CD4-positive, alpha-beta memory T cell (primary cell): ENCODE measurements at regions of chr2 and their contacts with region 1.

Region 1: GRCh38 chr2:231674587-231675338 is 33.6 kb upstream of the PTMA start:
- DNase-seq: peak in 4 of 5 donors; percentile 33 to 52 (median 38)
- H3K4me3 ChIP-seq: no peak overlapping the region
- H3K4me3 Mint-ChIP-seq: no peak overlapping the region
- H3K27ac ChIP-seq: no peak overlapping the region
- H3K27ac Mint-ChIP-seq: peak overlapping the region in 1 of 7 donors; percentile 37
- H3K4me1 ChIP-seq: peaks cover 10% of the 10 kb centered on the region
- H3K4me1 Mint-ChIP-seq: peaks cover 2 to 10% (median 4%) of the 10 kb centered on the region in 4 donors
- H3K27me3 ChIP-seq: no peaks in the 10 kb centered on the region
- H3K27me3 Mint-ChIP-seq: peaks cover 1 to 2% of the 10 kb centered on the region in 2 donors

Region 2: DNA sequence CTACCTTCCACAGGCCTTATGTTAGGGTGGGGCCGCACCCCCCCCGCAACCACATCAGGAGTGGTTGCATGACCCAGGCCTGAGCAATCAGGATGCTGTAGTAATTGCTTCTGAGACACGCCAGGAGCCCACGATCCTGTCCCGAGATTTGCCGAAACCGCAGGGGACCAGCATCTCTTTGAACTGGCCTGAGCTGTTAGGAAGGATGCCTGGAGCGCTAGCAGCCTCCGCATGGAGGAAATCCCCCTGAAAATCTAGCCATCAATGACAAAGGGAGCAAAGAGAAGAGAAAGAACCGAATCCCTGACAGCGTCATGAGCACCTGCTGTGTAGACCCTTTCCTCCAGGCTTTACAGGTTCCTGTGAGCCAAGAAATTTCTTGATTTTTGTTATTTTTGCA is 90.8 kb before region 1 on chr2:
- CTCF ChIA-PET with region 1: no interaction called
- POLR2A ChIA-PET with region 1: no interaction called
- intact Hi-C with region 1: no loop called
- DNase-seq: no peak
- H3K4me3 ChIP-seq: no peak overlapping the region
- H3K4me3 Mint-ChIP-seq: no peak overlapping the region
- H3K27ac ChIP-seq: no peak overlapping the region
- H3K27ac Mint-ChIP-seq: no peak overlapping the region
- H3K4me1 ChIP-seq: no peaks in the 10 kb centered on the region
- H3K4me1 Mint-ChIP-seq: peaks cover 0 to 2% (median 0%) of the 10 kb centered on the region in 4 donors
- H3K27me3 ChIP-seq: no peaks in the 10 kb centered on the region
- H3K27me3 Mint-ChIP-seq: peaks cover 7 to 12% of the 10 kb centered on the region in 2 donors

Region 3: DNA sequence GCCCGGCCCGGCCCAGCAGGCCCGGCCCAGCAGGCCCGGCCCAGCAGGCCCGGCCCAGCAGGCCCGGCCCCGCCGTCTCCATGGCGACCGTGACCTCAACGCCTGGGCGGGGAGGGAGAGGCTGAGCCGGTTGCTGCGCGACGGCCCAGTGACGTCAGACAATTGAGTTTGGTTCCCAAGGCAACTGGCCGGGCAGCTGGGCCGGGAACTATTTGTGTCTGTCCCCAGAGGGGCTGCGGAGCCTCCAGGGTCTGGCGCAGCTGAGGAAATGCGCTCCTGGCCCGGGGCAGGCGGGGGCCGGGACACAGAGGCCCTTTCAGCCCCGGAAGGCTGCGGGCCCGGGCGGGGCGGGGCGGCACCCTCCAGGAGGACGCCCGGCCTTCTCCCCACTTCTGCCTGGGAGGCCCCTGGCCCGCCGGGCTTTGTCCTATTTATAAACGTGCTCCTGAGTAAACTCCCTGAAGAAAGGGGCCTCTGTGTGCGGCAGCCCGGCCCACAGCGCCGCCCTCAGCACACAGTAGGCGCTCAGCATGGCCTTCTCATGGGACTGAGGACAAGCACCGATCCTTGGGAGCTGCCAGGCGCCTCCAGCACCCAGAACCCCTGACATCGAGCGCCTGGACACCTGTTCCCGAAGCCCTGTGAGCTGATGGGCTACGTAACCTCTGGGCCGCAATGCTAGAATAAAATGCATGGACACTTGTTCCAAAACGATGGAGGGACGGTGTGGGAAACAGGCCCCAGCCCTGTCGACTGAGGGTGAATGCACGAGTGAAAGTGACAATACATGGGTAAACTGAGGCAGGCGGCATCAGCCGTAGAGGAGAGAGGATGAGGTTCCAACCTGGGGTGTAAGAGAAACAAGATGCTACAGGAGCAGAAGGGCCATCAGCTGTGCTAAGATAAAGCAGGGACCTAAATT is 69.8 kb before region 1 on chr2:
- CTCF ChIA-PET with region 1: interaction called, 286 read pairs
- POLR2A ChIA-PET with region 1: interaction called, 49 read pairs
- intact Hi-C with region 1: no loop called
- DNase-seq: peak; percentile 94 to 97 (median 96)
- H3K4me3 ChIP-seq: peak overlapping the region in 1 of 2 donors; percentile 52
- H3K4me3 Mint-ChIP-seq: peak overlapping the region; percentile 69 to 82 (median 74)
- H3K27ac ChIP-seq: peak overlapping the region; percentile 89
- H3K27ac Mint-ChIP-seq: peak overlapping the region; percentile 89 to 97 (median 95)
- H3K4me1 ChIP-seq: peaks cover 14% of the 10 kb centered on the region
- H3K4me1 Mint-ChIP-seq: peaks cover 4 to 14% (median 10%) of the 10 kb centered on the region in 4 donors
- H3K27me3 ChIP-seq: no peaks in the 10 kb centered on the region
- H3K27me3 Mint-ChIP-seq: no peaks in the 10 kb centered on the region

Region 4: GRCh38 chr2:231621129-231621879 is 53.5 kb before region 1 on chr2:
- CTCF ChIA-PET with region 1: interaction called, 286 read pairs
- POLR2A ChIA-PET with region 1: interaction called, 3 read pairs
- intact Hi-C with region 1: no loop called
- DNase-seq: no peak
- H3K4me3 ChIP-seq: no peak overlapping the region
- H3K4me3 Mint-ChIP-seq: peak overlapping the region in 5 of 8 donors; percentile 17 to 54 (median 43)
- H3K27ac ChIP-seq: no peak overlapping the region
- H3K27ac Mint-ChIP-seq: peak overlapping the region in 6 of 7 donors; percentile 1 to 66 (median 52)
- H3K4me1 ChIP-seq: no peaks in the 10 kb centered on the region
- H3K4me1 Mint-ChIP-seq: peaks cover 6 to 22% (median 9%) of the 10 kb centered on the region in 4 donors
- H3K27me3 ChIP-seq: no peaks in the 10 kb centered on the region
- H3K27me3 Mint-ChIP-seq: no peaks in the 10 kb centered on the region

Region 5: GRCh38 chr2:231655897-231656296 is 18.9 kb before region 1 on chr2:
- CTCF ChIA-PET with region 1: interaction called, 30 read pairs
- POLR2A ChIA-PET with region 1: interaction called, 12 read pairs
- intact Hi-C with region 1: no loop called
- DNase-seq: no peak
- H3K4me3 ChIP-seq: no peak overlapping the region
- H3K4me3 Mint-ChIP-seq: no peak overlapping the region
- H3K27ac ChIP-seq: no peak overlapping the region
- H3K27ac Mint-ChIP-seq: peak overlapping the region in 1 of 7 donors; percentile 9
- H3K4me1 ChIP-seq: peaks cover under 1% of the 10 kb centered on the region
- H3K4me1 Mint-ChIP-seq: peaks cover 0 to 3% (median under 1%) of the 10 kb centered on the region in 4 donors
- H3K27me3 ChIP-seq: no peaks in the 10 kb centered on the region
- H3K27me3 Mint-ChIP-seq: peaks cover 0 to 2% of the 10 kb centered on the region in 2 donors

Region 6: GRCh38 chr2:231687133-231687852 is 12.5 kb after region 1 on chr2:
- CTCF ChIA-PET with region 1: interaction called, 54 read pairs
- POLR2A ChIA-PET with region 1: no interaction called
- intact Hi-C with region 1: loop called (anchors 1 kb)
- DNase-seq: peak in 4 of 5 donors; percentile 50 to 62 (median 55)
- H3K4me3 ChIP-seq: no peak overlapping the region
- H3K4me3 Mint-ChIP-seq: peak overlapping the region in 1 of 8 donors; percentile 29
- H3K27ac ChIP-seq: no peak overlapping the region
- H3K27ac Mint-ChIP-seq: peak overlapping the region in 5 of 7 donors; percentile 0 to 57 (median 36)
- H3K4me1 ChIP-seq: no peaks in the 10 kb centered on the region
- H3K4me1 Mint-ChIP-seq: peaks cover 0 to 6% (median 3%) of the 10 kb centered on the region in 4 donors
- H3K27me3 ChIP-seq: peaks cover 3% of the 10 kb centered on the region
- H3K27me3 Mint-ChIP-seq: peaks cover 3 to 5% of the 10 kb centered on the region in 2 donors

Region 7: GRCh38 chr2:231706731-231707624 is 32.2 kb after region 1 on chr2:
- CTCF ChIA-PET with region 1: interaction called, 742 read pairs
- POLR2A ChIA-PET with region 1: interaction called, 136 read pairs
- intact Hi-C with region 1: no loop called
- DNase-seq: peak; percentile 97 to 98 (median 98)
- H3K4me3 ChIP-seq: peak overlapping the region; percentile 90 to 96
- H3K4me3 Mint-ChIP-seq: peak overlapping the region; percentile 95 to 98 (median 97)
- H3K27ac ChIP-seq: peak overlapping the region; percentile 100
- H3K27ac Mint-ChIP-seq: peak overlapping the region; percentile 100
- H3K4me1 ChIP-seq: peaks cover 28% of the 10 kb centered on the region
- H3K4me1 Mint-ChIP-seq: peaks cover 10 to 54% (median 18%) of the 10 kb centered on the region in 4 donors
- H3K27me3 ChIP-seq: no peaks in the 10 kb centered on the region
- H3K27me3 Mint-ChIP-seq: peaks cover 0 to 6% of the 10 kb centered on the region in 2 donors

Region 8: DNA sequence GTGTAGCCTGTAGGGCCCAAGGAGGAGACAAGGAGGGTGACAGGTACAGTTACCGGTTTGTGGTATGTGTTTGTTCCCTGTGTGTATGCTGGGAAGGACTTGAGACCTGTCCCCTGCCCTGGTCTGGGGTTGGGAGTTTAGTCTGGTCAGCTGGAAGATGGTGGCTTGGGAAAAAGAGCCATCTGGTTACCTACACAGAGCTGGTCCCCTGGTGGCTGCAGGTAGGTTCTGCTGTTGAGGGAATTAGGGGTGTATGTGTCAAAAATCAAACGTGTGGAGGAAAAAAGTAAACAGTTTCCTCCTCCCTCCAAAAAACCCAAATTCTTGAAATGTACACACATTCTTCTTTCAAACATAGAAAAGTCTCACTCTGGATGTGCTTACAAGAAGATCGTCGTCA is 57.8 kb after region 1 on chr2:
- CTCF ChIA-PET with region 1: interaction called, 10 read pairs
- POLR2A ChIA-PET with region 1: no interaction called
- intact Hi-C with region 1: no loop called
- DNase-seq: no peak
- H3K4me3 ChIP-seq: no peak overlapping the region
- H3K4me3 Mint-ChIP-seq: no peak overlapping the region
- H3K27ac ChIP-seq: no peak overlapping the region
- H3K27ac Mint-ChIP-seq: peak overlapping the region in 2 of 7 donors; percentile 13 to 52
- H3K4me1 ChIP-seq: no peaks in the 10 kb centered on the region
- H3K4me1 Mint-ChIP-seq: no peaks in the 10 kb centered on the region
- H3K27me3 ChIP-seq: no peaks in the 10 kb centered on the region
- H3K27me3 Mint-ChIP-seq: no peaks in the 10 kb centered on the region